ENCODE measurements at regions of chr1 and their contacts with region 1.

Region 1: GRCh38 chr1:112501810-112502641 is 6.7 kb upstream of the WNT2B start:
- DNase-seq: no peak
- H3K4me3 ChIP-seq: peak overlapping the region; percentile 55
- H3K27ac ChIP-seq: no peak overlapping the region
- H3K27me3 ChIP-seq: peaks cover 14% of the 10 kb centered on the region
- CTCF ChIP-seq: peak; percentile 88

Region 2: DNA sequence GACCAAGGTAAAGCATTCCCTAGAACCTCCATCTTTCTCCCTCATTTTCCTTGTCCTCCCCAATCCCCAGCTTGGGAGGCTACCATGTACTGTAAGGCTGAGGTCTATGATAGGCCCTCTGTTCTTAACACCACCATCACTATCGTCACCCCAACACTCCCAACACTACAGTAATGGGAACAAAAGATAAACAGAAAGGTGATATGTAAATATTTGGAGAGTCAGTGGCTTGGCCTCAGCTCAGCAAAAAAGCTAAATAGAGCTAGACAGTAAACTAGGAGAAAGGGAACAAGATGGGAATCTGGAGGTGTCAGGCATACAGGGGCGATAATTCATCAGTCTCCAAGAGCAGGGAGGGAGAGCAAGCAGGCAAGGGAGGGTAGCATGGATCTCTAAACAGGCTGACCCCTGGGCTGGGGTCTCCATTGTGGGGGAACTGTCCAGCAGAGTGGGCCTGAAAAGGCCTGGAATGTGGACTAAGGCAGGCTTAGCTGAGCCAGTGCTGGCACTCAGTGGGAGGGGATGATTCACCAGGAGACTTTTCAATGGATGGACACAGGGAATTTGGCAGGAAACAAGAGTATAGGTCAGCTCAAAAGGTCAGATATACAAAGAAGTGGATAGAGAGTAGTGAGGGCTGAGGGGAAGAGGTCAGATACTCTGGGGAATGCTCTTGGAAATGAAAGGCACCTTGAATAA is 13.4 kb after region 1 on chr1:
- CTCF ChIA-PET with region 1: interaction called, 42 read pairs
- POLR2A ChIA-PET with region 1: interaction called, 6 read pairs
- DNase-seq: no peak
- H3K4me3 ChIP-seq: no peak overlapping the region
- H3K27ac ChIP-seq: peak overlapping the region; percentile 31
- H3K27me3 ChIP-seq: peaks cover 43% of the 10 kb centered on the region
- CTCF ChIP-seq: no peak

Region 3: DNA sequence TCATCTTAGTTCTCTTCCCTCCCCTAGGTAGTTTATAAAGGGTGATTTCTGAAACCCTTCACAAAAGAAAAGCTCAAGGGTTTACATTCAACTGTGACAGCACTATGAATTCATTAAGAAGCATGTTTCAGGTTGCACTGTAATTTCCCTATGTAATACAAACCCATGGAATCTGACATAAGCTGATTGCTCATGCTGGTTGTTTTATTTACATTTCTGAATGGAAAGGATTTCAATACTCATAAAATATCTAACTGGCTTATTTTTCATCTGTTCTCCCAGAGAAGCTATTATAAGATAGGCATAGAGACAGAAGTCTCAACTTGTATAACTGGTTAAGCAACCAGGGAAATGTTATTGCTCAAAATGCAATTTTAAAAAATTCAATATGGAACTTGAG is 27.3 kb after region 1 on chr1:
- CTCF ChIA-PET with region 1: interaction called, 29 read pairs
- POLR2A ChIA-PET with region 1: interaction called, 10 read pairs
- DNase-seq: no peak
- H3K4me3 ChIP-seq: no peak overlapping the region
- H3K27ac ChIP-seq: peak overlapping the region; percentile 23
- H3K27me3 ChIP-seq: peaks cover 4% of the 10 kb centered on the region
- CTCF ChIP-seq: no peak

Region 4: DNA sequence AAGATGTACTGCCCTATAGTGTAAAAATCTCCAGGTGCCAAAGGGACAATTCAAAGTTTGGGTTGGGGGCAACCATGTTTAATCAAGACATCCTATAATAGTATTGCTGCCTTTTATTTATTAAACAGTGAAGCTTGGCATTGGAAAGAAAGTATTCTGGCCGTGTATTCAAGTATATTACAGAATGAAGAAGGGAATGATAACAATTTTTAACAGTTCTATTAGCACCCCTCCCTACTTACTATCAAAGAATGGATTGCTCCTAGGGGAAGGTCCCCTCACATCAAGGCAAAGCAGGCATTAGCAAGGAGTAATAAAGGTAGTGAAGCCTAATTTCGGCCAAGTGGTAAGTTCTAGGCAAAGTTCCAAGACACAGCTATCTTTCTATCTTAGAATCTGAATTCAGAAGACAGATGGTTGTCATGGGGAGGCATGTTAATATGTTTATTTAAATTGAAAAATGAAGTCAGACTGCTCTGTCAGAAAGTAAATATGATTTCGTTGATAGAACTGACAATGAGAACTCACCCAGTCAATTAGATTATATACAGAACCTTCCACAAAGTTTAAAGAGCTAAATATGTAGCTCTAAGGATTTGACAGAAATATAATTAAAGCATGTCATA is 92.3 kb after region 1 on chr1:
- CTCF ChIA-PET with region 1: interaction called, 18 read pairs
- POLR2A ChIA-PET with region 1: no interaction called
- DNase-seq: no peak
- H3K4me3 ChIP-seq: no peak overlapping the region
- H3K27ac ChIP-seq: no peak overlapping the region
- H3K27me3 ChIP-seq: no peaks in the 10 kb centered on the region
- CTCF ChIP-seq: no peak

Region 5: DNA sequence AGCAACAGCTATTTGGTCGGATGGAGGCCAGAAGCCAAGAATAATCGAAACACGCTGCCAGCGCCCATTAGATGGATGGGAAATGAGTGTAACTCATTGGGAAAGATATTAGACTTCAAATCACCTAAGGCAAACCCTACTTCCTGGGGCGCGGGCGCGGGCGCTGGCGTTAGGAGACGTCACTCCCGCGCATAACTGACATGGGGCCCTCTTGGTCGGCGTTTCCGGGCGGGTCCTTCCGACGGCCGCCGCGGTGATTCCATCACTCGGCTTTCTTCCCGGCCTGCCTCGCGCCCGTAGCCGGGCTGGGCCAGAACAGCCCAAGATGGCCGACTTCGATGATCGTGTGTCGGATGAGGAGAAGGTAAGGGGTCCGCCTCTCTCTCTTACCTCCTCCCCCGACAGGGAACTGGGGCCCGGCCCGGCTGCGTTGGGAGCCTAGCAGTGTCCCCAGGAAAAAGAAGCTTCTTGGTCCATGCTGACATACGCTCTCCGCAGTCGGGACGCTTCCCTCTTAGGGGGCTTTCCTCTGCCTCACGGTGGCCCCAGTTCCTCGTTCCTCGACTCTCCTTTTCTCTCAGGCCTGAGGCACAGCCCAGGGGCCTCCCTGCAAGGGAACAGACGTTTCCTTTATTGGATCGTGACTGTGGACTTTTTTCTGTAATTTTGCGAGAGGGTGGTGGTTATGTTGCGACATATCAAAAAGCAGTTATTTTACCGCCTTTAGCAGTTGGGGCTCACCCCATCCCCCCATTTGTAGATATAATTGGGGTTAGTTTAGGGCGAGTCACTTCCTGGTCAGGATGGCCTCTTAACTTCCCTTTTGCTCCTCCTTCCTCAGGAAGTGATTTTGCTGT is 117.7 kb after region 1 on chr1 and contains the start of gene CAPZA1:
- CTCF ChIA-PET with region 1: interaction called, 177 read pairs
- POLR2A ChIA-PET with region 1: interaction called, 4 read pairs
- DNase-seq: peak; percentile 78
- H3K4me3 ChIP-seq: peak within 1 kb of the TSS; percentile 98
- H3K27ac ChIP-seq: peak within 1 kb of the TSS; percentile 96
- H3K27me3 ChIP-seq: no peaks in the 10 kb centered on the region
- CTCF ChIP-seq: no peak
- polyA plus RNA-seq, gene CAPZA1: 195 and 273 TPM in 2 replicates

Region 6: DNA sequence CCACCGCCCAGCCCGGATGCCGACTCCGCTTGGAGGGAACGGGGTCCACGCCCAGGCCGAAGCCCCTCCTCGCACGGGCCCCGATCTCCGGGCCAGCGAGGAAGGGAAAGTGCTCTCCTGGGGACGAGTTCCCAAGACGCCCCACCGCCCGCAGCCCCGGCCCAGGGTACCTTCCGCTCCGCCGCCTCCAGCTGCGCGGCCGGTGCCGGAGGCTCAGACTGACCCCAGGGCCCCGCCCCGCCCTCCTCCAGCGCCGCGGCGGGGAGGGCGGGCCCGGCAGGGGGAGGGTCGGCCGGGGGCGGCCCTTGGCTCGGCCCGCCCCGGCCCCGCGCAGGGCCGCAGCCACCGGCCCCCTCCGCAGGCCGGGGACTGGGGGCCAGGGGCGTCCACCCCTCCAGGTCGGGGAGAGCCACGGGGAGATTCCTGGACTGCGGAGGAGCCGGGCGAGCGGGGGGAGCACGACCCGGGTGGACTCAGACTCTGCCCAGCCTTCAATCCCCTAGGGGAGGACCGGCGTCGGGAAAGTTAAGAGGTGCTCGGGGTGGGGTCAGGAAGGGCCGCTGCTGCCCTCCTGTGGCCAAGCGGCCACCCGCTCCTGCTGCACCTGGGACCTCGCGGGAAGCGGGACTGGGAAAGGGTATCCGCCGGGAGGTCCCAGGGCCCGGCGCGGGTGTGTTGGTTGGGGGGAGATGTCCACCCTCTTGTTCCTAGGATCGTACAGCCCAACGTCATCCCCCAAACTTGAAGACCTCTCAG is 205.1 kb after region 1 on chr1 and contains the start of gene RHOC:
- CTCF ChIA-PET with region 1: interaction called, 12 read pairs
- POLR2A ChIA-PET with region 1: no interaction called
- DNase-seq: no peak
- H3K4me3 ChIP-seq: peak within 1 kb of the TSS; percentile 88
- H3K27ac ChIP-seq: peak within 1 kb of the TSS; percentile 74
- H3K27me3 ChIP-seq: no peaks in the 10 kb centered on the region
- CTCF ChIP-seq: peak; percentile 94
- polyA plus RNA-seq, gene RHOC: 574 and 734 TPM in 2 replicates